Activated naive CD4-positive, alpha-beta T cell treated with anti-CD3 and anti-CD28 coated beads for 36 hours (primary cell): ENCODE measurements at regions of chr7 and their contacts with region 1.

Region 1: GRCh38 chr7:6706677-6707544 is at the start of gene ZNF12:
- DNase-seq: peak; percentile 98
- H3K4me3 Mint-ChIP-seq: peak within 1 kb of the TSS; percentile 91
- H3K27ac Mint-ChIP-seq: peak within 1 kb of the TSS; percentile 91
- H3K4me1 Mint-ChIP-seq: peaks cover 35% of the 10 kb centered on the region
- H3K27me3 Mint-ChIP-seq: no peaks in the 10 kb centered on the region
- total RNA-seq, gene ZNF12: 12.8 to 13.3 TPM

Region 2: GRCh38 chr7:5435289-5436002 is 1271.5 kb before region 1 on chr7:
- CTCF ChIA-PET with region 1: no interaction called
- intact Hi-C with region 1: no loop called
- DNase-seq: no peak
- H3K4me3 Mint-ChIP-seq: no peak overlapping the region
- H3K27ac Mint-ChIP-seq: no peak overlapping the region
- H3K4me1 Mint-ChIP-seq: no peaks in the 10 kb centered on the region
- H3K27me3 Mint-ChIP-seq: peaks cover 11% of the 10 kb centered on the region

Region 3: GRCh38 chr7:6447581-6448199 is 259.2 kb before region 1 on chr7 and contains the start of gene DAGLB:
- CTCF ChIA-PET with region 1: no interaction called
- intact Hi-C with region 1: loop called (anchors 2 kb)
- DNase-seq: peak; percentile 96
- H3K4me3 Mint-ChIP-seq: peak within 1 kb of the TSS; percentile 91
- H3K27ac Mint-ChIP-seq: peak within 1 kb of the TSS; percentile 89
- H3K4me1 Mint-ChIP-seq: peaks cover 37% of the 10 kb centered on the region
- H3K27me3 Mint-ChIP-seq: no peaks in the 10 kb centered on the region
- total RNA-seq, gene DAGLB: 13.1 to 13.6 TPM

Region 4: DNA sequence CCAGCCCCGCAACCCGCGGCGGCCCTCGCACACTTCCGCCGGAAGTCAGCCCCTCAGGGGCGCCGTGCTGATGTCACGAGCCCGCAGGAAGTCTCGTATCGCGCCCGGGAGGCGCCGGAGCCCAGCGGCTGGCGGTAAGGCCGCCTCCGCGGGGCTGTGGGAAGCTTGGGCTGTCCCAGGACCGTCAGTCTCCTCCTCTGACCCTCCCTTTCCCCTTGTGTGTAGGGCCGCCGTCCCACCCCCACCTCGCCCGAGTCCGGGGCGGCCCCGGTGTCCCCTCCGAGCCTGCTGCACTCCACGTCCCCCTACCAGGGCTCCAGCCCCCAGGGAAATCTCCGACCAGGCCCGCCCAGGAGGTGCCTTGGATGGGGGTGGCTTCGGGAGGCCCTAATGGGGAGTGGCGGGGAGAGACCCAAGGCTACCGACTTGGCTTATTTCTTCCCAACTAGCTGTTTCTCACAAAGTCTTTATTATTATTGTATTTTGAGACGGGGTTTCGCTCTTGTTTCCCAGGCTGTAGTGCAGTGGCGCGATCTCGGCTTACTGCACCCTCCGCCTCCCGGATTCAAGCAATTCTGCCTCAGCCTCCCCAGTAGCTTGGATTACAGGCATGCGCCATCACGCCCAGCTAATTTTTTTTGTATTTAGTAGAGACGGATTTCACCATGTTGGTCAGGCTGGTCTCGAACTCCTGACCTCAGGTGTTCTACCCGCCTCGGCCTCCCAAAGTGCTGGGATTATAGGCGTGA is 129.4 kb before region 1 on chr7 and contains the start of gene ZDHHC4:
- CTCF ChIA-PET with region 1: no interaction called
- intact Hi-C with region 1: loop called (anchors 2 kb)
- DNase-seq: peak; percentile 91
- H3K4me3 Mint-ChIP-seq: peak within 1 kb of the TSS; percentile 84
- H3K27ac Mint-ChIP-seq: peak within 1 kb of the TSS; percentile 92
- H3K4me1 Mint-ChIP-seq: peaks cover 20% of the 10 kb centered on the region
- H3K27me3 Mint-ChIP-seq: no peaks in the 10 kb centered on the region
- total RNA-seq, gene ZDHHC4: 48.1 to 49.4 TPM

Region 5: DNA sequence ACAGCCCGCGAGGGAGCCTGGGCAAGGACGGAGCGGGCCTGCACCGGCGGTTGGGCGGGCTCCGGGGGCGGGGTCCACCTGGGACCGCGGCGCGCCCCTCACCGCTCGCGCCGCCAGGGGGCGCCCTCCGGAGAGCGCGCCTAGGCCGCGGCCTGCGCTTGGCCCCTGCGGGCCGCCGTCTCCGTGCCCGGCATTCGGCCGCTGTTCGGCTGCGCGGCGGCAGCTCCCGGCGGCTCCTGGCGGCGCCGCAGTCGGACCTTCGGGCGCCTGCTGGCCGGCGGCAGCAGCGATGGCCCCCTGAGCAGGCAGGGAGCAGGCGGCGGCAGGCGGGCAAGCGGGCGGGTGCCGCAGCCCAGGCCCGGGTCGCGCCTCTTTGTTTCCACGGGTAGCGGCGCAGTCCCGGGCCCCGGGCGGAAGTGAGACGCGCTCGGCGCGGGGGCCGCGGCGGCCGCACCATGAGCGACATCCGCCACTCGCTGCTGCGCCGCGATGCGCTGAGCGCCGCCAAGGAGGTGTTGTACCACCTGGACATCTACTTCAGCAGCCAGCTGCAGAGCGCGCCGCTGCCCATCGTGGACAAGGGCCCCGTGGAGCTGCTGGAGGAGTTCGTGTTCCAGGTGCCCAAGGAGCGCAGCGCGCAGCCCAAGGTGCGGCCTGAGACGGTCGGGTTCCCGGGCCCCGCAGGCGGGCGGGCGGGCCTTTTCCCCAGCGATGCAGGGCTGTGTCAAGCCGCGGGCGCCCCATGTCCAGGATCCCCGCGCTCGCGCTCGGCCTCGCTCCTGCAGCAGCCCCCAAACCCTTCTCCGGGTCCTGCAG is 116.9 kb before region 1 on chr7 and contains the start of gene INTS15:
- CTCF ChIA-PET with region 1: no interaction called
- intact Hi-C with region 1: loop called (anchors 2 kb)
- DNase-seq: peak; percentile 77
- H3K4me3 Mint-ChIP-seq: peak within 1 kb of the TSS; percentile 83
- H3K27ac Mint-ChIP-seq: peak within 1 kb of the TSS; percentile 77
- H3K4me1 Mint-ChIP-seq: peaks cover 22% of the 10 kb centered on the region
- H3K27me3 Mint-ChIP-seq: no peaks in the 10 kb centered on the region
- total RNA-seq, gene INTS15: 24.9 to 27.5 TPM

Region 6: GRCh38 chr7:6637544-6638229 is 69.2 kb before region 1 on chr7:
- CTCF ChIA-PET with region 1: no interaction called
- intact Hi-C with region 1: loop called (anchors 2 kb)
- DNase-seq: peak; percentile 49
- H3K4me3 Mint-ChIP-seq: peak overlapping the region; percentile 77
- H3K27ac Mint-ChIP-seq: peak overlapping the region; percentile 79
- H3K4me1 Mint-ChIP-seq: peaks cover 30% of the 10 kb centered on the region
- H3K27me3 Mint-ChIP-seq: no peaks in the 10 kb centered on the region

Region 7: DNA sequence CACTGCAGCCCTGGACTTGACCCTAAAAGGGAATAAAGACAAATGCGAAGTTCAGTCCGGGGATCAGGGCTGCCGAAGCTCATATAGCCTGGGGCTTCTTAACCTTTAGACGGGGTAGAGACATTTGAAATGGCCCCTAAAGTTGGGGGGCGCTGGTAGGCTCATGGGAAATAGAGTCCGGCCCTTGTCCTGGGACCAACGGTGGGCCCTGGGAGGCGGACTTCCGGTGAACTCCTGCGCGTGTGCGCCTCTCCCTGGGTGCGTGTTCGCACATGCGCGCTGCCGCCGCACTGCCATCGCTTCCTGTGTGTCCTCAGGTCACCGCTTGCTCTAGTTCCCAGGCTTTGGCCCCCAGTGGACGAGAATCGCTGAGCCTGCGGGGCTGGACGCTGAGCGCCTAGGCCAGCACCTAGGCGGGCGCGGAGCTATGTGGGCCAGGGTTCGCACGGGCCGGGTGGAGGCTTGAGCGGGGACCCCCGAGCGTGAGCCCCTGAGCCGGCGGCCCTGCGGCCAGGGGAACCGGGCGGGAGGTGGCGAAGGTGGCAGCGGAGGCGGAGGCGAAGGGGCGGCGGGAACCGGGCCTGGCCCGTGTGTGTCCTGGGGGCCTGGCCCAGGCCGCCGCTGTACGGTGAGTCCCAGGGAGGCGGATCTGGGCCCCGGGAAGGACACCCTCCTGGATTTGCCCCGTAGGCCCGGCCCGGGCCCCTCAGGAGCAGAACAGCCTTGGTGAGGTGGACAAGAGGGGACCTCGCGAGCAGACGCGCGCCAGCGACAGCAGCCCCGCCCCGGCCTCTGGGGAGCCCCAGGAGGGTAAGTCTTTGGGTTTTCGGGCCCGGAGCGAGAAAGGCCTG is 22.8 kb after region 1 on chr7:
- CTCF ChIA-PET with region 1: no interaction called
- intact Hi-C with region 1: loop called (anchors 1 kb)
- DNase-seq: peak; percentile 90
- H3K4me3 Mint-ChIP-seq: peak overlapping the region; percentile 86
- H3K27ac Mint-ChIP-seq: peak overlapping the region; percentile 77
- H3K4me1 Mint-ChIP-seq: peaks cover 21% of the 10 kb centered on the region
- H3K27me3 Mint-ChIP-seq: no peaks in the 10 kb centered on the region

Region 8: GRCh38 chr7:7051206-7051877 is 344.4 kb after region 1 on chr7:
- CTCF ChIA-PET with region 1: no interaction called
- intact Hi-C with region 1: no loop called
- DNase-seq: no peak
- H3K4me3 Mint-ChIP-seq: no peak overlapping the region
- H3K27ac Mint-ChIP-seq: no peak overlapping the region
- H3K4me1 Mint-ChIP-seq: no peaks in the 10 kb centered on the region
- H3K27me3 Mint-ChIP-seq: no peaks in the 10 kb centered on the region

Region 9: DNA sequence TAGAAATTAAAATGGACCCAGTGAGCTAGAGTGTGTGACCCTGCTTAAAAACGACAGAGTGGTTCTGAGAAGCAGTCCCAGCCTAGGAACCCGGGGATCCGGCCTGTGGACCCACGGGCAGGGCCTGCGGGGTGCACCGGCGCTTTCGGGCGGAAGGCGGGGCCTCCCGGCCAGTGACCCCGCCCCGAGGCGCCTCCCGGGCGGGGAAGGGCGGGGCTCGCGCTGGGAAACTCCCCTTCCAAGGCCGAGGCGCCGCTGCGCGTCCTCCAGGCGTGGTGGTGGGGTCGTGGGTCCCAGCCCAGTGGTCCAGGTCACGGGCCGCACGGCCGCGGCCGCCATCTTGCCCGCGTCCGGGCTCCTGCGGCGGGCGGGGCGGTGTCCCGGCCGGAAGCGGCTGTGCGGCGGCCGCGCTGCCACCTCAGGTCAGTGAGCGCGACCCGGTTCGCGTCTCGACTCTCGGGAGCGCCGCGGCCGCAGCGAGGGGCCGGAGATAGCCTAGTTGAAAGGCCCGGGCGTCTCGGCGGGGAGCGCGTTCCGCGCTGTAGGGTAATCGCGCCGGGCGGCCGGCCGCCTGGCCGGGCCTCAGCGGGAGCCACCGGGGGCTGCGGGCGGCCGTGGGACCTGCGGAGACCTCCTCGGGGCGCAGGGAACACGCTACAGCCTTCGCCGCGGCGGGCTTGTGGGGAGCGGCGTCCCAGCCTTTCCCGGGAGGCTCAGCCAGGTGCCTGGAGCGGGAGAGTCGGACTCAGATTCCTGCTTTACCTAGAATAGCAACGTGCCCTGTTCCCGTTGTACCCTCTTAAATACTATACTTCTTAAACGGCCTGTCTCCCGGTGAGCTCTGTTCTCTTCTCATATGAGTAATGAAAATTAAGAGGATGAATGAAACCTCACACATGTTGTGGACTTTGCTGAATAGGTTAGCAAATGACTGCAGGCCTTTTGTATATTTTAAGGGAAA is 860.0 kb after region 1 on chr7 and contains the start of gene MIOS:
- CTCF ChIA-PET with region 1: no interaction called
- intact Hi-C with region 1: loop called (anchors 5 kb)
- DNase-seq: peak; percentile 76
- H3K4me3 Mint-ChIP-seq: peak within 1 kb of the TSS; percentile 80
- H3K27ac Mint-ChIP-seq: peak within 1 kb of the TSS; percentile 63
- H3K4me1 Mint-ChIP-seq: peaks cover 30% of the 10 kb centered on the region
- H3K27me3 Mint-ChIP-seq: no peaks in the 10 kb centered on the region
- total RNA-seq, gene MIOS: 40.6 to 43.0 TPM